Caco-2 (cell line): ENCODE measurements at regions of chr1 and their contacts with region 1.

Region 1: DNA sequence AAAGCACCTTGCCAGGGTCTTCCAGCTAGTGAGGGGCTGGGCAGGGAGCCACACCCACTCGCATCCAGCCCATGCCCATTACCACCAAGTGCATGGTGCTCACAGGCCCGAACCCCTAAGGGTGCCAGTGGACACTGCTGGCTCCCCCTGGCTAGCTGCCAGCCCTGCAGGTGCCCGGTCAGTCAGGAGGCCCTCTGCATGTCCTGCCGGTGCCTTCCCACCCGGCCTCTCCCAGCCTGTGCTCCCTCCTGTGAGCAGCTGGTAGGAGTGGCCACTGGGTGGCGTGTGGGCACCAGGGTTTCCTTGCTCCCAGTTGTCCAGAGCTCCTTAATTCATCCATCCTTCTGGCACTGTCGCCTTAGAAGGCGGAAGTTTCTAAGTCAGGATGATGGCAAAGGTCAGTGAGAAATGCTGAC is 33.4 kb downstream of the QSOX1 start:
- DNase-seq: peak; percentile 80 to 82
- H3K4me3 ChIP-seq: no peak overlapping the region
- H3K4me3 Mint-ChIP-seq: no peak overlapping the region
- H3K27ac Mint-ChIP-seq: no peak overlapping the region
- H3K4me1 ChIP-seq: no peaks in the 10 kb centered on the region
- H3K4me1 Mint-ChIP-seq: peaks cover 6% of the 10 kb centered on the region
- H3K27me3 ChIP-seq: no peaks in the 10 kb centered on the region
- H3K27me3 Mint-ChIP-seq: no peaks in the 10 kb centered on the region
- CTCF ChIP-seq: peak; percentile 85 to 95

Region 2: GRCh38 chr1:180229152-180229973 is 41.3 kb after region 1 on chr1:
- CTCF ChIA-PET with region 1: interaction called, 12 read pairs
- POLR2A ChIA-PET with region 1: no interaction called
- intact Hi-C with region 1: loop called (anchors 5 kb)
- DNase-seq: peak in 1 of 2 experiments; percentile 52
- H3K4me3 ChIP-seq: peak overlapping the region; percentile 60
- H3K4me3 Mint-ChIP-seq: peak overlapping the region; percentile 79
- H3K27ac Mint-ChIP-seq: no peak overlapping the region
- H3K4me1 ChIP-seq: peaks cover 6% of the 10 kb centered on the region; the same call in 1 of the 2 replicates
- H3K4me1 Mint-ChIP-seq: no peaks in the 10 kb centered on the region
- H3K27me3 ChIP-seq: peaks cover 11% of the 10 kb centered on the region
- H3K27me3 Mint-ChIP-seq: peaks cover 23% of the 10 kb centered on the region
- CTCF ChIP-seq: no peak

Region 3: GRCh38 chr1:180343931-180344769 is 156.1 kb after region 1 on chr1:
- CTCF ChIA-PET with region 1: interaction called, 10 read pairs
- POLR2A ChIA-PET with region 1: no interaction called
- intact Hi-C with region 1: no loop called
- DNase-seq: no peak
- H3K4me3 ChIP-seq: no peak overlapping the region
- H3K4me3 Mint-ChIP-seq: no peak overlapping the region
- H3K27ac Mint-ChIP-seq: no peak overlapping the region
- H3K4me1 ChIP-seq: no peaks in the 10 kb centered on the region
- H3K4me1 Mint-ChIP-seq: no peaks in the 10 kb centered on the region
- H3K27me3 ChIP-seq: no peaks in the 10 kb centered on the region
- H3K27me3 Mint-ChIP-seq: no peaks in the 10 kb centered on the region
- CTCF ChIP-seq: no peak

Region 4: DNA sequence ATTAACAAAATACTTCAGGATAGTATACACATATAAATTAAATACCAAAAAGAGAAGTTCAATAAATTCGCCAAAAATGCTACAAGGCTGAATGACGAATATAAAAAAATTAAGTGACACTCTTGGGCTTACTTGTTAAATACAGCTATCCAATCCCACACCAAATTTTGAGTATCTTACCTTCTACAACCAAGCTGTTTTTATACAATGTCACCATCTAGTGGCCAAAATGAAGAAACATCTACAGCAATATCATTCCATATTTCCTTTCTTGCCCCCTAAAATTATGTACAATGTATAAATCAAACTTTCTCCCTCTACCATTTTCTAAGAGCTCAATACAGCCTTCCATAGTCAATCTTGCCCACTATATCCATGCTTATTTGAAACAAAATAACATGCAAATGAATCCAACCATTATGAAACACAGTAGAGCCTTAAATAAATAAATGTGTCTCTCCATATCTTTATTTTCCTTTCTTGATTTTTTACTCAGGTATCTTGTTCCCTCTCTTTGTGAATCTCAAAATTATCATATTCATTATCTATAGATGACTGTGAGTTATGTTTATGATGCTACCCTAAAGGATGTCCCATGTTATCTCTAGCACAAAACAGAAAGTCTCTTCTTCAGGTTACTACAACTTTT is 228.0 kb after region 1 on chr1:
- CTCF ChIA-PET with region 1: interaction called, 28 read pairs
- POLR2A ChIA-PET with region 1: no interaction called
- intact Hi-C with region 1: loop called (anchors 1 kb)
- DNase-seq: peak in 1 of 2 experiments; percentile 3
- H3K4me3 ChIP-seq: no peak overlapping the region
- H3K4me3 Mint-ChIP-seq: no peak overlapping the region
- H3K27ac Mint-ChIP-seq: no peak overlapping the region
- H3K4me1 ChIP-seq: no peaks in the 10 kb centered on the region
- H3K4me1 Mint-ChIP-seq: no peaks in the 10 kb centered on the region
- H3K27me3 ChIP-seq: no peaks in the 10 kb centered on the region
- H3K27me3 Mint-ChIP-seq: no peaks in the 10 kb centered on the region
- CTCF ChIP-seq: peak; percentile 45 to 66